GM12878 (cell line): ENCODE measurements at regions of chr1 and their contacts with region 1.

Region 1: DNA sequence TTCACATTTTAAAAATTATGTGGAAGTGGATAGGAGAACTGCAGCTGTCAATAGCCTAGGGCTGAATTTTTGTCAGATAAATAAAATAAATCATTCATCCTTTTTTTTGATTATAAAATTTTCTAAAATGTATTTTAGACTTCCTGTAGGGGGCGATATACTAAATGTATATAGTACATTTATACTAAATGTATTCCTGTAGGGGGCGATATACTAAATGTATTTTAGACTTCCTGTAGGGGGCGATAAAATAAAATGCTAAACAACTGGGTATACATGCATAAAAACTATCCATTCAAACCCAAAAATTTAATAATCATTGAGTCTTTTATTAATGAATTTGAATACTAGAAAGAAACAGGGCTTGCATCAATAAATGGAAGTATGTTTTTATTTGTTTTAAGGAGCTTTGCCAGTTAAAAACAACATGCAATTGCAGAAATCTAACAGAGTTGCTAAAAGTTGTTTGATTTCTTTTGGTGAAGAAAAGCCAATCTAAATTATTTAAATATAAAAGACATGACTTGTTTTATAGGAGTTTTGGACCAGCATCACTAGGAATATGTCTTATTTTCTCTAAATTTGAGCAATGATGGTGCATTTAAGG is 31.4 kb downstream of the CLCA1 start:
- DNase-seq: no peak
- ATAC-seq: peak; percentile 41; the same call in 1 of the 3 replicates
- H3K4me3 ChIP-seq: no peak overlapping the region
- H3K27ac ChIP-seq: no peak overlapping the region
- H3K4me1 ChIP-seq: no peaks in the 10 kb centered on the region
- H3K27me3 ChIP-seq: peaks cover 0 to 2% of the 10 kb centered on the region in 2 experiments; a peak in 2 of 4 replicates
- CTCF ChIP-seq: peak; percentile 65 to 90 (median 82); a peak in 5 of 6 replicates
- EP300 ChIP-seq: no peak
- POLR2A ChIP-seq: no peak
- RAD21 ChIP-seq: no peak

Region 2: GRCh38 chr1:86263101-86263500 is 237.0 kb before region 1 on chr1:
- CTCF ChIA-PET with region 1: no interaction called
- POLR2A ChIA-PET with region 1: no interaction called
- RAD21 ChIA-PET with region 1: no interaction called
- SMC1A ChIA-PET with region 1: no interaction called
- in situ Hi-C with region 1: no loop called
- intact Hi-C with region 1: no loop called
- DNase-seq: no peak
- ATAC-seq: no peak
- H3K4me3 ChIP-seq: no peak overlapping the region
- H3K27ac ChIP-seq: no peak overlapping the region
- H3K4me1 ChIP-seq: no peaks in the 10 kb centered on the region
- H3K27me3 ChIP-seq: no peaks in the 10 kb centered on the region
- CTCF ChIP-seq: no peak
- EP300 ChIP-seq: no peak
- POLR2A ChIP-seq: no peak
- RAD21 ChIP-seq: no peak

Region 3: GRCh38 chr1:86395771-86396497 is 104.2 kb before region 1 on chr1 and contains the start of gene ODF2L:
- CTCF ChIA-PET with region 1: interaction called, 12 read pairs
- POLR2A ChIA-PET with region 1: no interaction called
- RAD21 ChIA-PET with region 1: interaction called, 3 read pairs
- SMC1A ChIA-PET with region 1: interaction called, 5 read pairs
- in situ Hi-C with region 1: no loop called
- intact Hi-C with region 1: no loop called
- DNase-seq: peak; percentile 46
- ATAC-seq: peak; percentile 100
- H3K4me3 ChIP-seq: peak within 1 kb of the TSS; percentile 96
- H3K27ac ChIP-seq: peak within 1 kb of the TSS; percentile 54
- H3K4me1 ChIP-seq: no peaks in the 10 kb centered on the region
- H3K27me3 ChIP-seq: no peaks in the 10 kb centered on the region
- CTCF ChIP-seq: no peak
- EP300 ChIP-seq: no peak
- POLR2A ChIP-seq: peak; percentile 57; the same call in 1 of the 2 replicates
- RAD21 ChIP-seq: no peak
- polyA plus RNA-seq, gene ODF2L: 20.0 to 25.9 TPM

Region 4: GRCh38 chr1:86478416-86479156 is 21.5 kb before region 1 on chr1:
- CTCF ChIA-PET with region 1: interaction called, 40 read pairs
- POLR2A ChIA-PET with region 1: no interaction called
- RAD21 ChIA-PET with region 1: no interaction called
- SMC1A ChIA-PET with region 1: interaction called, 4 read pairs
- in situ Hi-C with region 1: no loop called
- intact Hi-C with region 1: loop called (anchors 1 kb)
- DNase-seq: no peak
- ATAC-seq: no peak
- H3K4me3 ChIP-seq: no peak overlapping the region
- H3K27ac ChIP-seq: no peak overlapping the region
- H3K4me1 ChIP-seq: no peaks in the 10 kb centered on the region
- H3K27me3 ChIP-seq: no peaks in the 10 kb centered on the region; a peak in 1 of 4 replicates
- CTCF ChIP-seq: no peak
- EP300 ChIP-seq: no peak
- POLR2A ChIP-seq: no peak
- RAD21 ChIP-seq: no peak

Region 5: DNA sequence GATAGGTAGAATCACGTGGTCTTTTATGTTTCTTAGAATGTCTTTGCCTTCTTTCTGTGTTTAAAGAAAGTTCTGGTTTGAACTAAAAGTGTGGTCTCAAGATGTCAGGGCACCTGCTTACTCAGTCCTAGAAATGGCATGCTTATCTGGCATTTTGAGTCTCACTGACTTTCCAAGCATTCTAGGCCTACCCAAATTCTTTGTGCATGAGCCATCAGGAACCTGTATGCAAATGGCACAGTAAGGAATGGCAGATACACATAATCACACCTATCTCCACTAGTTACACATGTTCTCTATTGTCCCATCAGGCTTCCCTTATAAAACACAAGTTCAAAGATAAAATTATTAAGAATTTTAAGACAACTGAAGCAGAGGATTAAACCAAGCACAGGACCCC is 17.2 kb after region 1 on chr1:
- CTCF ChIA-PET with region 1: interaction called, 22 read pairs
- POLR2A ChIA-PET with region 1: no interaction called
- RAD21 ChIA-PET with region 1: no interaction called
- SMC1A ChIA-PET with region 1: interaction called, 6 read pairs
- in situ Hi-C with region 1: no loop called
- intact Hi-C with region 1: no loop called
- DNase-seq: no peak
- ATAC-seq: no peak
- H3K4me3 ChIP-seq: no peak overlapping the region
- H3K27ac ChIP-seq: no peak overlapping the region
- H3K4me1 ChIP-seq: no peaks in the 10 kb centered on the region
- H3K27me3 ChIP-seq: no peaks in the 10 kb centered on the region
- CTCF ChIP-seq: no peak
- EP300 ChIP-seq: no peak
- POLR2A ChIP-seq: no peak
- RAD21 ChIP-seq: no peak

Region 6: DNA sequence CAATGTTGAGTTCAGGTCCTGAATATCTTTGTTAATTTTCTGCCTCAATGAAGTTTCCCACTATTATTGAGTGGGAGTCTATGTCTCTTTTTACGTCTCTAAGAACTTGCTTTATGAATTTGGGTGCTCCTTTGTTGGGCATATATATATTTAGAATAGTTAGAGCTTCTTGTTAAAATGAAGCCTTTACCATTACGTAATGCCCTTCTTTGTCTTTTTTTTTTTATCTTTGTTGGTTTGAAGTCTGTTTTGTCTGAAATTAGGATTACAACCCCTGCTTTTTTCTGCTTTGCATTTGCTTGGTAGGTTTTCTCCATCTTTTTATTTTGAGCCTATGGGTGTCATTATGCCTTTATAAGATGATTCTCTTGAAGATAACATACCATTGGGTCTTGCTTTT is 57.6 kb after region 1 on chr1:
- CTCF ChIA-PET with region 1: no interaction called
- POLR2A ChIA-PET with region 1: no interaction called
- RAD21 ChIA-PET with region 1: no interaction called
- SMC1A ChIA-PET with region 1: no interaction called
- in situ Hi-C with region 1: no loop called
- intact Hi-C with region 1: no loop called
- DNase-seq: no peak
- ATAC-seq: no peak
- H3K4me3 ChIP-seq: no peak overlapping the region
- H3K27ac ChIP-seq: no peak overlapping the region
- H3K4me1 ChIP-seq: no peaks in the 10 kb centered on the region
- H3K27me3 ChIP-seq: no peaks in the 10 kb centered on the region
- CTCF ChIP-seq: no peak
- EP300 ChIP-seq: no peak
- POLR2A ChIP-seq: no peak
- RAD21 ChIP-seq: no peak

Region 7: DNA sequence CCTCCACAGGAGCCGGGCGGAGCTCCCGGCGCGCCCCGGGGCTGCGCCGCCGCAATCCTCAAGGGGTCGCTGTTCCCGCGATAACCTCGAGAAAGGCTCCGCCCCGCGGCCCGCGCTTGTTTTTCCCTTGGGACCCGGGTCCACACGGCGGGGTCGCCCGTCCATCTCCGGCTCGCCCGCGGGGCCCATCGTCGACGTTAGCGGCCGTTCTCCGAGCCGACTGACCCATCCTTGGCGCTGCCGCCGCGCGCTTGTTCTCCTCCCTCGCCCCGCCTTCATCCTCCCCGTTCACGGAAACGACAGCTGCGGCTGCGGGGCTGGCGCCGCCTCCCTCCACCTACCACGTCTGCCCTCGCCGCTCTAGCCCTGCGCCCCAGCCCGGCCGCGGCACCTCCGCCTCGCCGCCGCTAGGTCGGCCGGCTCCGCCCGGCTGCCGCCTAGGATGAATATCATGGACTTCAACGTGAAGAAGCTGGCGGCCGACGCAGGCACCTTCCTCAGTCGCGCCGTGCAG is 204.4 kb after region 1 on chr1 and contains the start of gene SH3GLB1:
- CTCF ChIA-PET with region 1: interaction called, 15 read pairs
- POLR2A ChIA-PET with region 1: no interaction called
- RAD21 ChIA-PET with region 1: interaction called, 3 read pairs
- SMC1A ChIA-PET with region 1: interaction called, 6 read pairs
- in situ Hi-C with region 1: no loop called
- intact Hi-C with region 1: loop called (anchors 5 kb)
- DNase-seq: peak; percentile 61
- ATAC-seq: peak; percentile 92
- H3K4me3 ChIP-seq: peak within 1 kb of the TSS; percentile 93
- H3K27ac ChIP-seq: peak within 1 kb of the TSS; percentile 94
- H3K4me1 ChIP-seq: no peaks in the 10 kb centered on the region
- H3K27me3 ChIP-seq: no peaks in the 10 kb centered on the region
- CTCF ChIP-seq: peak; percentile 83 to 90 (median 84)
- EP300 ChIP-seq: no peak; a peak in 1 of 4 replicates
- POLR2A ChIP-seq: peak; percentile 90
- RAD21 ChIP-seq: peak; percentile 49
- polyA plus RNA-seq, gene SH3GLB1: 19.8 to 20.2 TPM

Region 8: GRCh38 chr1:86972262-86972661 is 472.2 kb after region 1 on chr1:
- CTCF ChIA-PET with region 1: no interaction called
- POLR2A ChIA-PET with region 1: no interaction called
- RAD21 ChIA-PET with region 1: no interaction called
- SMC1A ChIA-PET with region 1: no interaction called
- in situ Hi-C with region 1: no loop called
- intact Hi-C with region 1: no loop called
- DNase-seq: no peak
- ATAC-seq: no peak
- H3K4me3 ChIP-seq: no peak overlapping the region
- H3K27ac ChIP-seq: no peak overlapping the region
- H3K4me1 ChIP-seq: no peaks in the 10 kb centered on the region
- H3K27me3 ChIP-seq: no peaks in the 10 kb centered on the region
- CTCF ChIP-seq: no peak
- EP300 ChIP-seq: no peak
- POLR2A ChIP-seq: no peak
- RAD21 ChIP-seq: no peak